Activated CD8-positive, alpha-beta T cell treated with anti-CD3 and anti-CD28 coated beads, Interleukin-2, amount 10 ng/mL, durations not matched to agents 7 days and 5 days (primary cell): ENCODE measurements at regions of chr22 and their contacts with region 1.

Region 1: GRCh38 chr22:35150183-35151107 is 84.5 kb downstream of the ISX start:
- DNase-seq: peak; percentile 74
- ATAC-seq: peak; percentile 75
- H3K4me3 Mint-ChIP-seq: no peak overlapping the region
- H3K27ac Mint-ChIP-seq: no peak overlapping the region
- H3K4me1 Mint-ChIP-seq: no peaks in the 10 kb centered on the region
- H3K27me3 Mint-ChIP-seq: no peaks in the 10 kb centered on the region

Region 2: GRCh38 chr22:35043252-35043931 is 107.1 kb before region 1 on chr22:
- CTCF ChIA-PET with region 1: interaction called, 14 read pairs
- POLR2A ChIA-PET with region 1: no interaction called
- DNase-seq: no peak
- ATAC-seq: no peak
- H3K4me3 Mint-ChIP-seq: no peak overlapping the region
- H3K27ac Mint-ChIP-seq: no peak overlapping the region
- H3K4me1 Mint-ChIP-seq: no peaks in the 10 kb centered on the region
- H3K27me3 Mint-ChIP-seq: no peaks in the 10 kb centered on the region

Region 3: GRCh38 chr22:35092406-35092805 is 58.0 kb before region 1 on chr22:
- CTCF ChIA-PET with region 1: interaction called, 10 read pairs
- POLR2A ChIA-PET with region 1: interaction called, 3 read pairs
- DNase-seq: no peak
- ATAC-seq: no peak
- H3K4me3 Mint-ChIP-seq: no peak overlapping the region
- H3K27ac Mint-ChIP-seq: no peak overlapping the region
- H3K4me1 Mint-ChIP-seq: no peaks in the 10 kb centered on the region
- H3K27me3 Mint-ChIP-seq: peaks cover 7% of the 10 kb centered on the region

Region 4: DNA sequence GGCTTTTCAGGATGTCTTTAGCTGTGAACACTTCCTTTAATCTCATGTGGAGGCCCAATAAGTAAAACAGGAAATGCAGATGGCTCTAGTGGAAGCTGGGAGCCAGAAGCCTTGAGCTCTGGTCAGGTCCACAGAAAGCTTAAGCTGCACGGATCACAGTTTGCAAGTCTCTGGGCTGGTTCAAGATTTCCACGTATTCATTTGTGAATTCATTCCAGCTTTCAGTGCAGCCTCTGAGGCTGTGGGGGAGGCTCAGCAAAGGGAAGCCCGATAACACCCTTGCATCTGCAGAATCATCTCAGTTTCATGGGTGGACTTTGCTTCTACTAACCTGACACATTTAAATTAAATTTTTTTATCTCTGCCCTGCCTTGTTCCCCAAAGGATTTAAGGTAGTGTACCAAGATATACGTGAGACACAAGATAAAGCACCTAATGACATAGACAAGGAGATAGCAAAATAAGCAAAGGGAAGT is 18.9 kb before region 1 on chr22:
- CTCF ChIA-PET with region 1: interaction called, 15 read pairs
- POLR2A ChIA-PET with region 1: no interaction called
- DNase-seq: no peak
- ATAC-seq: no peak
- H3K4me3 Mint-ChIP-seq: no peak overlapping the region
- H3K27ac Mint-ChIP-seq: no peak overlapping the region
- H3K4me1 Mint-ChIP-seq: peaks cover 35% of the 10 kb centered on the region
- H3K27me3 Mint-ChIP-seq: peaks cover 19% of the 10 kb centered on the region

Region 5: GRCh38 chr22:35231585-35232084 is 81.2 kb after region 1 on chr22:
- CTCF ChIA-PET with region 1: interaction called, 12 read pairs
- POLR2A ChIA-PET with region 1: no interaction called
- DNase-seq: peak; percentile 81
- ATAC-seq: peak; percentile 84
- H3K4me3 Mint-ChIP-seq: no peak overlapping the region
- H3K27ac Mint-ChIP-seq: no peak overlapping the region
- H3K4me1 Mint-ChIP-seq: peaks cover 12% of the 10 kb centered on the region
- H3K27me3 Mint-ChIP-seq: peaks cover 18% of the 10 kb centered on the region